PC-9 (cell line): ENCODE measurements at regions of chr13 and their contacts with region 1.

Region 1: GRCh38 chr13:51148952-51149573 is 38.0 kb upstream of the C13orf42 start:
- DNase-seq: peak; percentile 10 to 42
- H3K4me3 ChIP-seq: no peak overlapping the region
- H3K27ac ChIP-seq: no peak overlapping the region
- H3K4me1 ChIP-seq: no peaks in the 10 kb centered on the region
- H3K27me3 ChIP-seq: peaks cover 55% of the 10 kb centered on the region
- CTCF ChIP-seq: peak; percentile 59

Region 2: DNA sequence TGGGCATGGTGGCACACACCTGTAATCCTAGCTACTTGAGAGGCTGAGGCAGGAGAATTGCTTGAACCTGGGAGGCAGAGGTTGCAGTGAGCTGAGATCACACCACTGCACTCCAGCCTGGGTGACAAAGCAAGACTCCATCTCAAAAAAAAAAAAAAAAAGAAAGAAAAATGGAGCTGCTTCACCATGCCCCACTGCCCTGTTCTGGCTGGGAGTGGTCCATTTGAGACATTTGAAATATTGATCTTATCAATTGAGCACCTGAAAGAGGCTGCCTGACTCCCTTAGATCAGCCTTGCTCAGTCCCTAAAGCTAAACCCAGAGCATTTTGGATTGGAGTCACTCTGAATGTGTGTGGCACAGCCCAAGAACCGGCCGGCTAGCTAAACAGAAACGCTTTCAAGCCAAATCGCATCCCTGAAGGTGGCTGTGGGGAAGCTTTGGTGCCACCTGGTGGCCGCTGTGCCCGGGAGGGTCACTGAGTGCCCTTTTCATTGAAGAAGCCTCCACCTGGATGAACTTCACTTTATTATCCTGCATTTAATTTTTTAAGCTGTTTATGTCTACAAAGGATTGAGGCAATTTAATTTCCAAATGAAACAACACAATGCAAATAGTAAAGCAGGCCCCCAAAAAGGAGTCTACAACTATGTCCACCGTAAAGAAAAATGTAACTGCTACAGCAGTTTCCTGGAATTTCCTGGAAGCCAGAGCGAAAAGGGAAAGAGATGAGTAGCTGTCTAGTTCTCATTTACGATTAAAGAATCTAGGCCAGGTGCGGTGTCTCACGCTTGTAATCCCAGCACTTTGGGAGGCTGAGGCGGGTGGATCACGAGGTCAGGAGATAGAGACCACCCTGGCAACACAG is 137.3 kb after region 1 on chr13:
- CTCF ChIA-PET with region 1: interaction called, 4 read pairs
- POLR2A ChIA-PET with region 1: no interaction called
- intact Hi-C with region 1: loop called (anchors 1 kb)
- DNase-seq: peak; percentile 39 to 70
- H3K4me3 ChIP-seq: no peak overlapping the region
- H3K27ac ChIP-seq: no peak overlapping the region
- H3K4me1 ChIP-seq: no peaks in the 10 kb centered on the region
- H3K27me3 ChIP-seq: peaks cover 50% of the 10 kb centered on the region
- CTCF ChIP-seq: peak; percentile 88

Region 3: GRCh38 chr13:51343475-51343874 is 194.4 kb after region 1 on chr13:
- CTCF ChIA-PET with region 1: interaction called, 15 read pairs
- POLR2A ChIA-PET with region 1: no interaction called
- intact Hi-C with region 1: no loop called
- DNase-seq: no peak
- H3K4me3 ChIP-seq: no peak overlapping the region
- H3K27ac ChIP-seq: no peak overlapping the region
- H3K4me1 ChIP-seq: no peaks in the 10 kb centered on the region
- H3K27me3 ChIP-seq: no peaks in the 10 kb centered on the region
- CTCF ChIP-seq: no peak

Region 4: GRCh38 chr13:51874651-51875050 is 725.6 kb after region 1 on chr13:
- CTCF ChIA-PET with region 1: no interaction called
- POLR2A ChIA-PET with region 1: no interaction called
- intact Hi-C with region 1: no loop called
- DNase-seq: no peak
- H3K4me3 ChIP-seq: no peak overlapping the region
- H3K27ac ChIP-seq: no peak overlapping the region
- H3K4me1 ChIP-seq: no peaks in the 10 kb centered on the region
- H3K27me3 ChIP-seq: peaks cover 28% of the 10 kb centered on the region
- CTCF ChIP-seq: no peak